PC-9 (cell line): ENCODE measurements at regions of chr5 and their contacts with region 1.

Region 1: GRCh38 chr5:150190996-150191395 is 1.1 kb downstream of the SLC6A7 start:
- DNase-seq: peak in 1 of 2 experiments; percentile 10
- H3K4me3 ChIP-seq: no peak overlapping the region
- H3K27ac ChIP-seq: no peak overlapping the region
- H3K4me1 ChIP-seq: 0 out of 2 replicates have a peak, but pooled peaks cover 5% of the 10 kb centered on the region
- H3K27me3 ChIP-seq: peaks cover 25% of the 10 kb centered on the region
- CTCF ChIP-seq: no peak

Region 2: DNA sequence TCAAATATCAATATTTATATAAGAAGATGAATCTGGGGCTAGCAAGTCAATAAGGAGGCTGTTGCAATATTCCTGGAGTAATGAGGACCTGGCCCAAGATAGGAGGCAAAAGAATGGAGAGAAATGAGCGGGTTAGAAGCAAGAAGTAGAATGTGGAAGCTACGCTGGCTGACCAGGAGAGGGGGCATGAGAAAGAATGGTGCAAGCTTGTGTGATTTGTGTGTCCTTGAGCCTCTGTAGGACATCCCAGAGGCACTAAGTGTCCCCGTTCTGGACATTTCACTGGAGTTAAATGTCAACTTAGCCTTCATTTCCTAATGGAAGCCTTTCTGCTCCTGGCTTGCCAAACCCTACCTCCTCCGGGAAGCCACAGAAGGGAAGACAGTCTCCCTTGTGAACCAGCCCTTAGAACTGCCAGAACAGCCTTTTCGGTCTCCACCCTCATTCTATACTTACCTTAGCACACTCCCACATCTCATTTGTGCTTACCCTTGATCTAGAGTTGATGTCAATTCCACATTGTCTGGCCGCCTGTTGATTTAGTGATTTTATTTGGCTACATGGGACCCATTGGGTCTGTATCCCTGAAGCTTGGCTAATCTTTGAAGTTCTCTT is 239.8 kb before region 1 on chr5:
- CTCF ChIA-PET with region 1: no interaction called
- POLR2A ChIA-PET with region 1: interaction called, 13 read pairs
- intact Hi-C with region 1: no loop called
- DNase-seq: no peak
- H3K4me3 ChIP-seq: no peak overlapping the region
- H3K27ac ChIP-seq: no peak overlapping the region
- H3K4me1 ChIP-seq: peaks cover 8% of the 10 kb centered on the region; the same call in 1 of the 2 replicates
- H3K27me3 ChIP-seq: no peaks in the 10 kb centered on the region
- CTCF ChIP-seq: no peak